ENCODE measurements at regions of chr14 and their contacts with region 1.

Region 1: GRCh38 chr14:65824285-65824977 is 411.9 kb downstream of the FUT8 start:
- DNase-seq: peak in 3 of 6 donors; percentile 29 to 66 (median 41)
- ATAC-seq: peak; percentile 78 to 99 (median 96)
- H3K4me3 ChIP-seq: no peak overlapping the region
- H3K27ac ChIP-seq: no peak overlapping the region
- H3K4me1 ChIP-seq: no peaks in the 10 kb centered on the region
- H3K27me3 ChIP-seq: no peaks in the 10 kb centered on the region
- CTCF ChIP-seq: peak; percentile 83 to 87 (median 85)

Region 2: GRCh38 chr14:65164068-65164824 is 660.2 kb before region 1 on chr14:
- intact Hi-C with region 1: loop called in 2 of 3 experiments (anchors 5 to 10 kb)
- DNase-seq: peak in 1 of 6 donors; percentile 31
- ATAC-seq: peak in 3 of 4 donors; percentile 83 to 91 (median 84)
- H3K4me3 ChIP-seq: no peak overlapping the region
- H3K27ac ChIP-seq: no peak overlapping the region
- H3K4me1 ChIP-seq: no peaks in the 10 kb centered on the region
- H3K27me3 ChIP-seq: no peaks in the 10 kb centered on the region
- CTCF ChIP-seq: peak in 3 of 4 donors; percentile 27 to 51 (median 33)

Region 3: GRCh38 chr14:65169351-65169750 is 655.1 kb before region 1 on chr14:
- intact Hi-C with region 1: loop called in 2 of 3 experiments (anchors 5 to 10 kb)
- DNase-seq: no peak
- ATAC-seq: no peak
- H3K4me3 ChIP-seq: no peak overlapping the region
- H3K27ac ChIP-seq: no peak overlapping the region
- H3K4me1 ChIP-seq: no peaks in the 10 kb centered on the region
- H3K27me3 ChIP-seq: peaks cover 0 to 3% (median 0%) of the 10 kb centered on the region in 4 donors
- CTCF ChIP-seq: no peak

Region 4: DNA sequence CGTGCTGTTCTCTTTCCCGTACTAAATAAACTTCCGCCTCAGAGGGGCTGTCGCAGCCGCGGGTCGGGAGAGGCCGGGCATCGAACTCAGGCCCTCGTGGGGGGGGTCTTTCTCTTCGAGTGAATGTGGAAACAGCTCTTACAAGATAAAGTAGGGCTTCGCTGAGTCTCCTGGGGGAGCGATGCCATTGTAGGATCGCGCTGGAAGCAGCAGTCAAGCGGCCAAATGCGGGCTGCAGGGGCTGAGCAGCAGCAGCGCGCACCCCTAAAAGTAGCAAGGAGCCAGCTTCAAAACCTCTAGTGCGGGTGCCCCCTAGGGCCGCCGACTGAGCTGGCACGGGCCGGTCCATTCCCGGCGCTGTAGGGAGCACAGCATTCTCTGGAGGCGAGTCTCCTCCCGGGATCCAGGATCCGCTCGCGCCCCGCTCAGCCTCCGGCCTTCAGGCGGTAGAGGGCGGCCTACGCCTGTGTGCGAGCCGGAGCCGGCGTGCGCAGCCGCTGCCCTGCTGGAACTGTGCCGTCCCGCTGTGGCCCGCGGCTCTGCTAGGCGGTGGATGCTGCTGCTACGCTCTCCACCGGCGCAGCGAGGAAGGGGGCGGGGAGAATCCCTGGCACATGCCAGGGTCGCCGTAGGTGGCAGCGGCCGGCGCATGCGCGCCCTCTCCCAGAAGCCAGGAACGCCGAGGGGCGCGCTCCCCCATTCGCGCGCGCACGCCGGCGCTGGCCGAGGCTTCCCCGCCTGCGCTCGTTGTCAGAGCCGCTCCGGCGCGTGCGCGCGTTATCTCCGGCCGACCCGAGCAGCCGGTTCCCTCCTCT is 412.2 kb before region 1 on chr14 and contains the start of gene FUT8:
- intact Hi-C with region 1: loop called in 2 of 3 experiments (anchors 5 to 10 kb)
- DNase-seq: peak; percentile 97 to 99 (median 98)
- ATAC-seq: peak; percentile 84 to 94 (median 88)
- H3K4me3 ChIP-seq: peak within 1 kb of the TSS; percentile 82 to 88 (median 86)
- H3K27ac ChIP-seq: peak within 1 kb of the TSS; percentile 90 to 97 (median 92)
- H3K4me1 ChIP-seq: peaks cover 3 to 5% (median 4%) of the 10 kb centered on the region in 3 donors
- H3K27me3 ChIP-seq: no peaks in the 10 kb centered on the region
- CTCF ChIP-seq: peak in 3 of 4 donors; percentile 19 to 46 (median 19)
- total RNA-seq, gene FUT8: 19.1 to 42.6 (median 22.6) TPM

Region 5: GRCh38 chr14:65750906-65751305 is 73.5 kb before region 1 on chr14:
- intact Hi-C with region 1: no loop called
- DNase-seq: no peak
- ATAC-seq: peak in 2 of 4 donors; percentile 38 to 49
- H3K4me3 ChIP-seq: no peak overlapping the region
- H3K27ac ChIP-seq: no peak overlapping the region
- H3K4me1 ChIP-seq: no peaks in the 10 kb centered on the region
- H3K27me3 ChIP-seq: no peaks in the 10 kb centered on the region
- CTCF ChIP-seq: no peak

Region 6: DNA sequence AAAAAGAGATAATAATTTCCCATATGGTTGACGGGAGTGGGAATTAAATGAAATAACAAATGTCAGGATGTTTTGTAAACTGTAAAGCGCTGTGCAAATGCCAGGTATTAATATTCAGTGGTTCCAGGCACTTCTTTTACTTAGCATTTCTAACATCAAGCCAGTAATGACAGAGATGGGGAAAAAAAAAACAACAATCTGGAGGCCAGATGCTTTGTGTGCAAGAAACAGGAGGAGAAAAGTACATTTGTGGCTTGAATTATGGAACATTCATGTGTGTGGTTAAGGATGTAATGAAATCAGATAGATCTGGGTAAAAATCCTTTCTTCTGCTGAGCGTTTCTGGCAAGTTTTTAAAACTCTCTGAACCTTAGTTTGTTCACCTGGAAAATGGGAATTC is 97.7 kb after region 1 on chr14:
- intact Hi-C with region 1: no loop called
- DNase-seq: no peak
- ATAC-seq: no peak
- H3K4me3 ChIP-seq: no peak overlapping the region
- H3K27ac ChIP-seq: no peak overlapping the region
- H3K4me1 ChIP-seq: no peaks in the 10 kb centered on the region
- H3K27me3 ChIP-seq: no peaks in the 10 kb centered on the region
- CTCF ChIP-seq: no peak

Measured in pancreas (tissue), 10 donors.